Activated naive CD4-positive, alpha-beta T cell treated with anti-CD3 and anti-CD28 coated beads, Interleukin-2, amount 10 ng/mL, durations not matched to agents 7 days and 5 days (primary cell): ENCODE measurements at regions of chr5 and their contacts with region 1.

Region 1: GRCh38 chr5:39187831-39188731 is 31.3 kb downstream of the FYB1 start:
- DNase-seq: peak; percentile 42
- H3K4me3 Mint-ChIP-seq: peak overlapping the region; percentile 62
- H3K27ac Mint-ChIP-seq: peak overlapping the region; percentile 91
- H3K4me1 Mint-ChIP-seq: peaks cover 89% of the 10 kb centered on the region
- H3K27me3 Mint-ChIP-seq: no peaks in the 10 kb centered on the region

Region 2: DNA sequence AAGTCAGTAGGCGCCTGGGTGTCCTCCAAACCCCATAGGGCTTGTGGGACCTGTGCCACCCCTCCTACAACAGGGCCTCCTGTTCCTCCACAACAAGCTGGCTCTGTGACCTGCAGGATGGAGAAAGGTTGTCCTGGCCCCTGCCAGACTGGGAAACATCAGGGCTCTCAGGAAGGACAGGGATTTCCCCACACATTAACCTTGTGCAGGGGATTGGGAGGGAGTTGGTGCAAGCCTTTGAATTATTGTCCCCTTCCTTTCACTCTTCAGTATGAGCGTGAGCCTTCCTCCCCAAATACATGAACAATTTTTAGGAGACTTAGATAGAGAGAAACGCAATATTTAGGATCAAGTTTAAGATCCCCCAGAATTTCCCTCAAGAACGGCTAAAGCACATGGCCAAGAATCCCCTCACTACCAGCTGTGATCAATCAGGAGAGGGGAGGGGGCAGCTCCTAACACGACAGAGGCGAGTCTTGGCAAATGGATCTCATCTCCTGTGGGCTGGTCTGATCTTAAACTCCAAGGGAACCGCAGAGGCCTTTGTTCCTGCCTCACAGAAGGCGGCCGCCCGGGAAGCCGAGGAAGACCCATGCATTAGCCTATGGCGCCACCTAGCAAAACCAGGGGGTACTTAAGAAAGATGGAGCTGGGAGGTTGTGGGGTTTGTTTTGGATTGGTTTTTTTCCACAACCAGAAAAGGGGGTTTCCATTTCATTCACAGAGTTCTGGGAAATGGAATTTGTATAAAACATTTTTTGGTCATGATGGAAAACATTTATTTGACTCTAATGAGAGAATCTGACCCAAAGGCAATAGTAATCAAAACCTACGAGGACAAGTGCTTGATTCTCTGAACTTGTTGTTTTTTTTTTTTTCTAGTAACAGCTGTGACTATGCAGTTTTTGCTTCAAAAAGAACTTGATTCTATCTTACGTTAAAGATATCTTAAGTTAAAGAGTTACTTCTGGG is 378.4 kb before region 1 on chr5:
- CTCF ChIA-PET with region 1: no interaction called
- DNase-seq: peak; percentile 73
- H3K4me3 Mint-ChIP-seq: no peak overlapping the region
- H3K27ac Mint-ChIP-seq: no peak overlapping the region
- H3K4me1 Mint-ChIP-seq: peaks cover 2% of the 10 kb centered on the region
- H3K27me3 Mint-ChIP-seq: peaks cover 22% of the 10 kb centered on the region

Region 3: GRCh38 chr5:39148983-39149534 is 39.0 kb before region 1 on chr5:
- CTCF ChIA-PET with region 1: interaction called, 10 read pairs
- DNase-seq: no peak
- H3K4me3 Mint-ChIP-seq: no peak overlapping the region
- H3K27ac Mint-ChIP-seq: peak overlapping the region; percentile 26
- H3K4me1 Mint-ChIP-seq: peaks cover 53% of the 10 kb centered on the region
- H3K27me3 Mint-ChIP-seq: no peaks in the 10 kb centered on the region

Region 4: GRCh38 chr5:39202597-39203274 is 14.7 kb after region 1 on chr5:
- CTCF ChIA-PET with region 1: interaction called, 20 read pairs
- DNase-seq: peak; percentile 66
- H3K4me3 Mint-ChIP-seq: peak overlapping the region; percentile 88
- H3K27ac Mint-ChIP-seq: peak overlapping the region; percentile 94
- H3K4me1 Mint-ChIP-seq: peaks cover 41% of the 10 kb centered on the region
- H3K27me3 Mint-ChIP-seq: no peaks in the 10 kb centered on the region